ENCODE measurements at regions of chr20 and their contacts with region 1.

Region 1: GRCh38 chr20:47418061-47418912 is 61.8 kb upstream of the ZMYND8 start:
- DNase-seq: no peak
- ATAC-seq: no peak
- H3K4me3 ChIP-seq: no peak overlapping the region
- H3K4me3 Mint-ChIP-seq: no peak overlapping the region
- H3K27ac ChIP-seq: peak overlapping the region; percentile 97 to 99
- H3K27ac Mint-ChIP-seq: peak overlapping the region; percentile 99
- H3K4me1 ChIP-seq: peaks cover 59 to 73% of the 10 kb centered on the region in 2 donors
- H3K4me1 Mint-ChIP-seq: peaks cover 67% of the 10 kb centered on the region
- H3K27me3 ChIP-seq: no peaks in the 10 kb centered on the region
- H3K27me3 Mint-ChIP-seq: no peaks in the 10 kb centered on the region
- CTCF ChIP-seq: no peak

Region 2: GRCh38 chr20:47315342-47315662 is 103.0 kb before region 1 on chr20:
- CTCF ChIA-PET with region 1: no interaction called
- POLR2A ChIA-PET with region 1: no interaction called
- intact Hi-C with region 1: no loop called
- DNase-seq: no peak
- ATAC-seq: no peak
- H3K4me3 ChIP-seq: no peak overlapping the region
- H3K4me3 Mint-ChIP-seq: no peak overlapping the region
- H3K27ac ChIP-seq: no peak overlapping the region
- H3K27ac Mint-ChIP-seq: no peak overlapping the region
- H3K4me1 ChIP-seq: peaks cover 31 to 34% of the 10 kb centered on the region in 2 donors
- H3K4me1 Mint-ChIP-seq: peaks cover 56% of the 10 kb centered on the region
- H3K27me3 ChIP-seq: no peaks in the 10 kb centered on the region
- H3K27me3 Mint-ChIP-seq: no peaks in the 10 kb centered on the region
- CTCF ChIP-seq: no peak

Region 3: GRCh38 chr20:47453142-47453782 is 35.0 kb after region 1 on chr20:
- CTCF ChIA-PET with region 1: interaction called, 4 read pairs
- POLR2A ChIA-PET with region 1: interaction called, 13 read pairs
- intact Hi-C with region 1: no loop called
- DNase-seq: peak; percentile 43
- ATAC-seq: peak; percentile 72
- H3K4me3 ChIP-seq: no peak overlapping the region
- H3K4me3 Mint-ChIP-seq: peak overlapping the region; percentile 78
- H3K27ac ChIP-seq: peak overlapping the region in 1 of 2 donors; percentile 9
- H3K27ac Mint-ChIP-seq: peak overlapping the region; percentile 86
- H3K4me1 ChIP-seq: peaks cover 42 to 45% of the 10 kb centered on the region in 2 donors
- H3K4me1 Mint-ChIP-seq: peaks cover 50% of the 10 kb centered on the region
- H3K27me3 ChIP-seq: no peaks in the 10 kb centered on the region
- H3K27me3 Mint-ChIP-seq: no peaks in the 10 kb centered on the region
- CTCF ChIP-seq: no peak

Region 4: GRCh38 chr20:47809913-47810622 is 391.8 kb after region 1 on chr20:
- CTCF ChIA-PET with region 1: no interaction called
- POLR2A ChIA-PET with region 1: no interaction called
- intact Hi-C with region 1: no loop called
- DNase-seq: no peak
- ATAC-seq: no peak
- H3K4me3 ChIP-seq: no peak overlapping the region
- H3K4me3 Mint-ChIP-seq: no peak overlapping the region
- H3K27ac ChIP-seq: no peak overlapping the region
- H3K27ac Mint-ChIP-seq: no peak overlapping the region
- H3K4me1 ChIP-seq: no peaks in the 10 kb centered on the region
- H3K4me1 Mint-ChIP-seq: no peaks in the 10 kb centered on the region
- H3K27me3 ChIP-seq: peaks cover 0 to 11% (median 0%) of the 10 kb centered on the region in 4 experiments
- H3K27me3 Mint-ChIP-seq: peaks cover 64% of the 10 kb centered on the region
- CTCF ChIP-seq: no peak

Measured in B cell (primary cell).